ENCODE measurements at regions of chr14 and their contacts with region 1.

Region 1: DNA sequence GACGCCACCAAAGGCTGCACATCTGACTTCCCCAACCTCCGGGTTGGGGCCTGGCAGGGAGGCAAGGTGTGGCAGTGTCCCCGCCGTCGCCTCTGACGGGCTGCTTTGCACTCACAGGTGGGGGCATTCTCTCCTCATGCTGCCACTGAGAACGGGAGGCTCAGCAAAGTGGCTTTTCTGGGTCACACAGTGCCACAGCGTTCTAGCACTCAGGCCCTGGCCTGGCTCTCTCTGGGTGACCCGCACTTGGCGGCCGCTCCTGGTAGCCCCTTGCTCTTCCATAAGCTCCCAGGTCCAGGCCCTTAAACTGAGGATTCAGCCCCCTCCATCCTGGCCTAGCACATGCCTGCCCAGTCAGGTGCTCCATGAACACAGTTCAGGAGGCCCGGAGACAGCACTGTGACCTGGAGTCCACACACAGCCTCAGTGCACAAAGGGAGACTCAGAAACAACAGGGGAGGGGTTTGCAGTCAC is 25.2 kb downstream of the SERPINA1 start:
- DNase-seq: no peak
- H3K4me3 ChIP-seq: no peak overlapping the region
- H3K27ac ChIP-seq: no peak overlapping the region
- H3K4me1 ChIP-seq: no peaks in the 10 kb centered on the region
- H3K27me3 ChIP-seq: no peaks in the 10 kb centered on the region
- CTCF ChIP-seq: no peak
- POLR2A ChIP-seq: no peak

Region 2: DNA sequence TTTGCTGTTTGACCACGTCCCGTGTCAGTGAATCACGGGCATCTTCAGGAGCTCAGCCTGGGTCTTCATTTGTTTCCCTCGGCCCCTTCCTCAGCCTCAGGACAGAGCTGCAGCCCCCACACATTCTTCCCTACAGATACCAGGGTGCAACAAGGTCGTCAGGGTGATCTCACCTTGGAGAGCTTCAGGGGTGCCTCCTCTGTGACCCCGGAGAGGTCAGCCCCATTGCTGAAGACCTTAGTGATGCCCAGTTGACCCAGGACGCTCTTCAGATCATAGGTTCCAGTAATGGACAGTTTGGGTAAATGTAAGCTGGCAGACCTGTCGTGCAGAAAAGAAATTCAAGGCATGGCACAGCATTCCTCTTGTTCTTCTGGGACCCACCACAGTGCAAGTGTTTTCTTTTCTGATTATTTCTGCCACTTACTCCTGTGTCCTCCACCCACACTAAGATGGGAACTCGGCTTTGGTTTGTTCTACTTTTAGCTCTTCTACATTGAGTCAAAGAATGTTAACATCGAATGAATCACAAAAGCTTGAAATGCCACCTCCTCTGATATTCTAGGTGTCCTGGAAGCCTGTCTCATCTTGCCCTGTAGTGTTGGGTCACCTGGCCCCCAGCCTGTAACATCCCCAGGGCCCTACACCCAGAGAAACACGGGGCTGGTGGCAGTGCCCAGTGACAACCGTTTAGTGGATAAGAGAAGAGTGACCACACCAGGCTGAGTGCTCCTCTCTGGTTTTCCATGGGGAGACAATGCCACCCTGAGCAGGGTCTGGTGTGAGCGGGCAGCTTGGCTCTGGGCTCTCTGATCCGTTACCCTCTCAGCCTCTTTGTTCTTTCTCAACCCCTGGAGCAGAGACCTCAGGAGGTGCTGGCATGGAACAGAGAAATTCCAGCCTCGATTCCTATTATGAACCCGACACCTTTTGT is 16.4 kb after region 1 on chr14:
- intact Hi-C with region 1: loop called (anchors 2 kb)
- DNase-seq: no peak
- H3K4me3 ChIP-seq: no peak overlapping the region
- H3K27ac ChIP-seq: no peak overlapping the region
- H3K4me1 ChIP-seq: no peaks in the 10 kb centered on the region
- H3K27me3 ChIP-seq: no peaks in the 10 kb centered on the region
- CTCF ChIP-seq: no peak
- POLR2A ChIP-seq: no peak

Region 3: GRCh38 chr14:94485944-94486841 is 123.0 kb after region 1 on chr14:
- intact Hi-C with region 1: no loop called
- DNase-seq: peak in 1 of 2 donors; percentile 42
- H3K4me3 ChIP-seq: no peak overlapping the region
- H3K27ac ChIP-seq: no peak overlapping the region
- H3K4me1 ChIP-seq: no peaks in the 10 kb centered on the region
- H3K27me3 ChIP-seq: no peaks in the 10 kb centered on the region
- CTCF ChIP-seq: peak; percentile 78 to 96 (median 82)
- POLR2A ChIP-seq: no peak

Measured in uterus (tissue), 4 donors.